ENCODE measurements at regions of chr17 and their contacts with region 1.

Region 1: DNA sequence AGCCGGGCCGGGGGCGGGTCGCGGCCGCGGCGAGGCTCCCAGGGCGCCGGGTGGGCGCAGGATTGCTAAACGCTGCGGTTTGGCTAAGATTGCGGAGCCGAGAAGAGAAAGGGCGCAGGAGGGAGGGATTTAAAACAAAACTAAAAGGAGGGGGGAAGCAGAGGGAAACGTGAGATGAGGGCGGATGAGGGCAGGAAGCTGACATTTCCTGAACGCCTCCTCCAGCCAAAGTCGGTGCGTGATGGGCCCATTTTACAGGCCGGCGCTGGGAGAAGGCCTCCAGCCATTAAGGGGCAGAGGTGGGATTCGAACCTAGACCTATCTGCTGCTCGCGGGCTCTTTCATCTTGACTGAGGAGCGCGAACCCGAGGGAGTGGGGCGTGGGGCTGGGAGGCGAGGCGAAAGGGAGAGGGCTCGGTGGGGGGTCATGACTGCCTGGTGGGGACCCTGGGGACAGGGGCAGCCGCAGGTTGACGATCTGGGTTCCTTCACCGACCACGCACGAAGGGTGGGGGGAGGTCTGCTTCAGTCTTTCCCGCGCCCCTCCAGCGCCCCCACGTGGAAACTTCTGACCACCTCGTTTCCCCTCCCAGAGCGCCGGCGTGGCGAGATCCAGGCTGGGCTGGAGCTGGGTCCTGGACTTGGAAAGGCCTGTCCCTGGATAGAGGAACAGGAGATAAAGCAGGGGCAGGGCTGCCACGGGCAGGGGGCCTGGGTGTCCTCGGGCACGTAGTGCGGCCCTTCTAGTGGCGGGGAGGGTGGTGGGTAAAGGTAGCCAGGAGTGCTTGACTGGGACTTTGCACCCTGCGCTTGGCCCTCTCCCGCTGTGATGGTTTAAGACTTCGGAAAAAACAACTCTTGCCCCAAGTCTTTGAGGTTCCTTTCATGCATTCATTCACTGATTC is 3.8 kb upstream of the TAC4 start:
- DNase-seq: peak in 8 of 10 donors; percentile 53 to 92 (median 62)

Region 2: DNA sequence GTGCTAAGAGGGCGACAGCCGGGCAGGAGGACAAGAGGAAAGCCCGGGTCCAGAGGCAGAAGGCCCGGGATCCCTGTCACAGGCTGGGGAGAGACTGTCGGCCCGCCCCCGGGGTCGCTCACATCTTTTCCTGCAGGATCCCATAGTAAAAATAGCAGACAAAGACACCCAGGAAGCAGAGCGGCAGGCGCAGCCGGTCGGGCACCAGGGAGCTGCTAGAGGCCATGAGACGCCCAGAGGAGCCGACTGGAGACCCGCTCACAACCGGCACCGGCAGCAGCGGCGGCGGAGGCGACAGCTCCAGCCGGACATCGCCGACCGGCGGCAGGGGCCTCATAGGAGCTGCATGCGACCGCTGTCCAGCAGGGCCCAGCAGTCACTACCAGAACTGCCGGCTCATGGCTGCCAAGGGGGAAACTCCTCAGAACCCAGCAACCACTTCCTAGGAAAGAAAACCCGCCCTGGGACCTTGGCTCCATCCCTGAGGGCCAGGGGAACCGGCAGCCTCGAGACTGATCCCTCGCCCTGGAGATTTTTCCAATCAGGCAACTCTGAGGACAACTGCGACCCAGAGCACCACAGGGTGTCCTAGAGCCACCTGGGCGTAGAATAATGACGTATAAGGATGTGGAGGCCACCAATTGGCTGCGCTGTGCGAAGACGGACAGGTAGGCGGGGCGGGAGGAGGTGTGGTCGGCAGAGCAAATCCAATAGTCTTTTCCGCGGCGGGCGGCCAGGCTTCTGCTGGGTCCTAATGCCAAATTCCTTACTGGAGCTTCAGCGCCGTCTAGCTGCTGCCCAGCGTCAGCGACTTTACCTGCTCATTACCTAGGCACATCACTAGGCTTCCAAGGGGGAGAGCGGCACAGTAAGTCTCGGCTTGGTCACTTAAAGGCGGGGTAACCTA is 143.8 kb before region 1 on chr17 and contains the start of gene SLC35B1:
- intact Hi-C with region 1: loop called (anchors 5 kb)
- DNase-seq: peak; percentile 99 to 100 (median 100)